Right ventricle myocardium superior (tissue), 1 donor: ENCODE measurements at regions of chr19 and their contacts with region 1.

Region 1: GRCh38 chr19:7340959-7341837 is 7.5 kb upstream of the ARHGEF18 start:
- DNase-seq: peak; percentile 90
- ATAC-seq: peak; percentile 64

Region 2: DNA sequence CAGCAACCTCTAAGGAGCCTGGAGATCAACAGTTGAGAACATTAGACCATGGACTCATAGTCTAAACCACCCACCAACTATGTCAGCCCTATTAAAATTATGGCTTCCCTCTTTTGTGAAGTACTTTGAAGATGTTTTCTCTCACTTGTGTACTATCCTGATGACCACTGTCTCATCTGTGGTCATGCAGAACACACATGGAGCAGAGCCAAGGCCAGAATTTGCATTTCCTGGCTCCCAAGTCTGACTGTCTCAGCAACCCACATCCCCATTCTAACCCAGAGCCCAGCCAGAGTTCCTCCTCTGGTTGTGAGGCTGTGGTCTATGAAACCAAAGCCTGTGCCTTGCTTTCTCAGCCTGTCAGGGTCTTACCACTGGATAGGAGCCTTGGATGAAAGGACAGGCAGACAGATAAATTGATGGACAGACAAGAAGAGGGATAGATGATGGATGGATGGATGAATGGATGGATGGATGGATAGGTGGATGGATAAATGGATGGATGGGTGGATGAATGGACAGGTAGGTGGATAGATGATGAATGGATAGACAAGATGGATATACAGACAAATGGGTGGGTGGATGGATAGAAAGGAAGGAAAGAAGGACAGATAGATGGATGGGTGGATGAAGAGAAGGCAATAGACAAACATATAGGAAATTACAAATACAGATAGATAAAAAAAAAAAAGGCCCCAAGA is 236.3 kb before region 1 on chr19:
- intact Hi-C with region 1: loop called (anchors 5 kb)
- DNase-seq: no peak
- ATAC-seq: no peak

Region 3: GRCh38 chr19:7149956-7150705 is 191.1 kb before region 1 on chr19:
- intact Hi-C with region 1: loop called (anchors 2 kb)
- DNase-seq: no peak
- ATAC-seq: no peak